Activated T-helper 1 cell treated with anti-CD3 and anti-CD28 coated beads, Interleukin-12 subunit alpha, Interleukin-12 subunit beta, Interleukin-2, Interleukin-4 antibody, amounts not matched to agents 30 ng/mL and 10 ng/mL and 1 ng/mL, durations not matched to agents 14 hours and 24 hours and 36 hours (primary cell): ENCODE measurements at regions of chr2 and their contacts with region 1.

Region 1: DNA sequence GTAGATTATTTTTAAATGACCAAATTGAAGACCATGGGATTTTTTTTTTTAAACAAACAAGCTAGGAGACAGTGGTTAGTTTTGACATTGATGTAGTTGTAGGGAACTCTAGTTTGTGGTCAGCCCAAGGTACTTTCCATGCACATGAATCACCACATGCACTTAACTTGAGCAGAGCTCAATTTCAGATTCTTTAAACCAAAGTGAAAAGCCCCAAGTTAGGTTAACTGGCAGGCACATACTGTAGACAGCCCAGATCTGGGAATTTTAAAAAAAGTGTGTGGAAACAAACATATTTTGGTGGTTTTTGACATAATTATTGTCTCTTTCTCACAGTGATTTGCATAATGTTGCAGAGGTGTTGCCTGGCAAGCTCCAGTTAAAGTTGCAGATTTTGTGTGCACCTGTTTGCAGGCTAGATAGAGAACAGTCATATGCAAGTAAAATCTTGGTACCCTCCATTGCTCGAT is 88.4 kb downstream of the BCL2L11 start:
- DNase-seq: peak; percentile 62
- H3K4me3 Mint-ChIP-seq: peak overlapping the region; percentile 39
- H3K27ac Mint-ChIP-seq: peak overlapping the region; percentile 73
- H3K4me1 Mint-ChIP-seq: peaks cover 42% of the 10 kb centered on the region
- H3K27me3 Mint-ChIP-seq: peaks cover 8% of the 10 kb centered on the region

Region 2: DNA sequence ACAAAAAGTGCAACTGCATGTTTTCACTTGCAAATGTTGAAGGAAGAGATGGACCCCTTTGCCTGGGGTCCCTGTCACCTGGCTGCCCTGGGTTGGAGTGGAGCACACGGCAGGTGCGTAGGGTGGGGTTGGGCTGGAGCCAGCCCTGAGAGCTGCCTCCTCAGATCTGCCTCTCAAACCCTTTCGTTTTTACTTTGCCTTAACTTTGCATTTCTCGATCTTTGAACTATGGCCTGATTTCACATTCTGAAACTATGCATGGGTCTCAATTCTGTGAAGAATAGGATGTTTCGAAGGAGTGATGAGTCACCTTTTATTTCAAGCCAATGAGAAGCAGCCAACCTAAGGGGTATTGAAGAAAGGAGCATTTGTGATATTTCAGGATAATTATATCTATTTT is 343.9 kb before region 1 on chr2:
- intact Hi-C with region 1: loop called (anchors 5 kb)
- DNase-seq: no peak
- H3K4me3 Mint-ChIP-seq: peak overlapping the region; percentile 48
- H3K27ac Mint-ChIP-seq: peak overlapping the region; percentile 32
- H3K4me1 Mint-ChIP-seq: peaks cover 76% of the 10 kb centered on the region
- H3K27me3 Mint-ChIP-seq: peaks cover 19% of the 10 kb centered on the region

Region 3: GRCh38 chr2:111157798-111158197 is 51.3 kb before region 1 on chr2:
- intact Hi-C with region 1: no loop called
- DNase-seq: no peak
- H3K4me3 Mint-ChIP-seq: no peak overlapping the region
- H3K27ac Mint-ChIP-seq: peak overlapping the region; percentile 65
- H3K4me1 Mint-ChIP-seq: peaks cover 84% of the 10 kb centered on the region
- H3K27me3 Mint-ChIP-seq: peaks cover 3% of the 10 kb centered on the region

Region 4: DNA sequence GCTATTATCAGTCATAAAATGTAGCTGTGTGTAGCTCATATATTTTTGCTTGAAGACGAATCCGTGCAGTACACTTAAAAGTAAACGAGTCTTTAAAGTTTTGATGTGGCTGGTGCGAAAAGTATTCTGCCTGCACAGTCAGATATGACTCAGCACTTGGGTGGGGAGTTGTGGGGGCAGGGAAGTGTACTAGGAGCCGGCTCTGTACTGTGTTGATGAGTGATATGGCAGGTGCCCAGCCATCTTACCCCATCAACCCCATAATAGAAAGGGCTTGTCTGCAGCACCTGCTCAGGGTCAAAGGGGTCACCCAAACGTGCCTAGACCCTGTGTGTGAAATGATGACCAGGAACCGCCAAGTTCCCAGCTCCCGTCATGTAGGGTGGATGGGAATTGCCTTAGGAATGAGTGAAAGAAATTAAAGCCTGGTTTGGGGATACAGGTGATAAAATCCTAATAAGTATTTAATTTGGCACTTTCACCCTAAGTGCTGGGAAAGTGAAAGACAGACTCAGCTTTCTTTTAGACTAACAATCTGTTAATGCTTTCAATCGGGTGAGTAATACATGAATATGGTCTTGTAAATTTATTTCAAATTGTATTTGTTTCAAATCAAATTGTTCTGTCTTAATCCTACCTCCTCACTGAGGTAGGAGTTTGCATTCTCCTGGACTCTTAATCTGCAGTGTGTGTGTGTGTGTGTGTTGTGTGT is 40.4 kb before region 1 on chr2:
- intact Hi-C with region 1: loop called (anchors 1 kb)
- DNase-seq: peak; percentile 61
- H3K4me3 Mint-ChIP-seq: peak overlapping the region; percentile 0
- H3K27ac Mint-ChIP-seq: peak overlapping the region; percentile 76
- H3K4me1 Mint-ChIP-seq: peaks cover 60% of the 10 kb centered on the region
- H3K27me3 Mint-ChIP-seq: peaks cover 12% of the 10 kb centered on the region

Region 5: GRCh38 chr2:111227716-111228141 is 18.6 kb after region 1 on chr2:
- intact Hi-C with region 1: loop called (anchors 2 kb)
- DNase-seq: no peak
- H3K4me3 Mint-ChIP-seq: no peak overlapping the region
- H3K27ac Mint-ChIP-seq: peak overlapping the region; percentile 3
- H3K4me1 Mint-ChIP-seq: peaks cover 5% of the 10 kb centered on the region
- H3K27me3 Mint-ChIP-seq: peaks cover 15% of the 10 kb centered on the region

Region 6: GRCh38 chr2:111250448-111251030 is 41.5 kb after region 1 on chr2:
- intact Hi-C with region 1: loop called (anchors 2 kb)
- DNase-seq: no peak
- H3K4me3 Mint-ChIP-seq: no peak overlapping the region
- H3K27ac Mint-ChIP-seq: no peak overlapping the region
- H3K4me1 Mint-ChIP-seq: peaks cover 33% of the 10 kb centered on the region
- H3K27me3 Mint-ChIP-seq: peaks cover 11% of the 10 kb centered on the region